PC-9 (cell line): ENCODE measurements at regions of chr20 and their contacts with region 1.

Region 1: GRCh38 chr20:60894110-60894872 is 357.8 kb upstream of the CDH4 start:
- DNase-seq: no peak
- H3K4me3 ChIP-seq: no peak overlapping the region
- H3K27ac ChIP-seq: no peak overlapping the region
- H3K4me1 ChIP-seq: no peaks in the 10 kb centered on the region
- H3K27me3 ChIP-seq: peaks cover 5% of the 10 kb centered on the region; the same call in 1 of the 2 replicates
- CTCF ChIP-seq: no peak

Region 2: GRCh38 chr20:60009826-60010616 is 884.3 kb before region 1 on chr20:
- CTCF ChIA-PET with region 1: no interaction called
- POLR2A ChIA-PET with region 1: no interaction called
- intact Hi-C with region 1: loop called (anchors 5 kb)
- DNase-seq: no peak
- H3K4me3 ChIP-seq: no peak overlapping the region
- H3K27ac ChIP-seq: no peak overlapping the region
- H3K4me1 ChIP-seq: 0 out of 2 replicates have a peak, but pooled peaks cover 7% of the 10 kb centered on the region
- H3K27me3 ChIP-seq: no peaks in the 10 kb centered on the region
- CTCF ChIP-seq: peak; percentile 51

Region 3: GRCh38 chr20:60913298-60913697 is 19.0 kb after region 1 on chr20:
- CTCF ChIA-PET with region 1: no interaction called
- POLR2A ChIA-PET with region 1: no interaction called
- intact Hi-C with region 1: no loop called
- DNase-seq: no peak
- H3K4me3 ChIP-seq: no peak overlapping the region
- H3K27ac ChIP-seq: no peak overlapping the region
- H3K4me1 ChIP-seq: no peaks in the 10 kb centered on the region
- H3K27me3 ChIP-seq: 0 out of 2 replicates have a peak, but pooled peaks cover 3% of the 10 kb centered on the region
- CTCF ChIP-seq: no peak

Region 4: GRCh38 chr20:61253264-61253639 is 359.0 kb after region 1 on chr20:
- CTCF ChIA-PET with region 1: no interaction called
- POLR2A ChIA-PET with region 1: no interaction called
- intact Hi-C with region 1: no loop called
- DNase-seq: no peak
- H3K4me3 ChIP-seq: no peak overlapping the region
- H3K27ac ChIP-seq: no peak overlapping the region
- H3K4me1 ChIP-seq: no peaks in the 10 kb centered on the region
- H3K27me3 ChIP-seq: peaks cover 68% of the 10 kb centered on the region
- CTCF ChIP-seq: no peak